OCI-LY7 (cell line): ENCODE measurements at regions of chr2 and their contacts with region 1.

Region 1: DNA sequence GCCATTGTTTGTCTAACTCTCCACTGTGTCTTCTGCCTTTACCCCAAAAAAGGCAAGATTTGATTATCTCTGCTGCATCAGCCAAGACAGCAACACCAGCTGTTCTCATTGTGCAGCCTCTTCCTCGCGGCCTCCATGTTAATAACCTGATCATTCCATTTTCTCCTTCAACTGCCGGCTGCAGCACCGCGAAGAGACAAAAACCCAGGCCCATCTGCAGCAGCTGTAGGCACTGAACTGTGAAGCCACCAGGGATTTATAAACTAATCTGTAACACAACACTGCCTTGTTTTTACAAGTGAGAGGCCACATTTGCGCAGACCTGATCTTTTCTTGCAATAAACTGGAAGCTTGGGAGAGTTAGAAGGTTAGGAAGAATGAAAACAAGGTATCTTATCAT is 147.8 kb downstream of the SATB2 start:
- DNase-seq: peak; percentile 96
- H3K4me3 ChIP-seq: peak overlapping the region; percentile 54
- H3K27ac ChIP-seq: peak overlapping the region; percentile 99
- H3K4me1 ChIP-seq: peaks cover 84% of the 10 kb centered on the region
- CTCF ChIP-seq: no peak

Region 2: DNA sequence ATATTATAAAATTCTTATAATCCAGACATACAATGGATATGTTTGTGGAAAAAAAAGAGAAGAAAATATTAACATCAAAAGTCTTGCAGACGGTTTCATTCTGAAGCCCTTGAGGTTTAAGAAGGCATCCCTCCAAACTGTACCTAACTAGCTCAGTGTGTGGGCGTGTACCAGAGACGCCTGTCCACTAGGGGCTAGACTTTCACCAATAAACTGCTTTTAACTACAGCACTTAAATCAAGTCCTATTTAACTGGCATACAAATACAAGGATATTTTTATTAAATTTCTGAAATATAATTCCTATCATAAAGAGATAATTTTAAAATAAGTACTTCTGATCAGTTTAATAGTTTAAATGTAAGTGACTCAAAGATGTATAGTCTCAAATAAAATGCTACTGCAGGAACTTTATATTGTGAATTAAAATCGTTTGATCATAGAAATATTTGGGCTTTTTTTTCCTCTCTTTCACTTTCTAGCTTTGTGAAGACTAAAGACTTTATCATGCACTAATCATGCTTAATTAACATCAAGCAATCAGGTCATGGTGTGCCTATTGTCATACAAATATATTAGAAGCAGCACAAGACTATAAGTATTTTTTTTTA is 290.0 kb before region 1 on chr2:
- CTCF ChIA-PET with region 1: no interaction called
- POLR2A ChIA-PET with region 1: no interaction called
- intact Hi-C with region 1: loop called (anchors 5 kb)
- DNase-seq: peak; percentile 85
- H3K4me3 ChIP-seq: no peak overlapping the region
- H3K27ac ChIP-seq: no peak overlapping the region
- H3K4me1 ChIP-seq: peaks cover 29% of the 10 kb centered on the region
- CTCF ChIP-seq: peak; percentile 91

Region 3: DNA sequence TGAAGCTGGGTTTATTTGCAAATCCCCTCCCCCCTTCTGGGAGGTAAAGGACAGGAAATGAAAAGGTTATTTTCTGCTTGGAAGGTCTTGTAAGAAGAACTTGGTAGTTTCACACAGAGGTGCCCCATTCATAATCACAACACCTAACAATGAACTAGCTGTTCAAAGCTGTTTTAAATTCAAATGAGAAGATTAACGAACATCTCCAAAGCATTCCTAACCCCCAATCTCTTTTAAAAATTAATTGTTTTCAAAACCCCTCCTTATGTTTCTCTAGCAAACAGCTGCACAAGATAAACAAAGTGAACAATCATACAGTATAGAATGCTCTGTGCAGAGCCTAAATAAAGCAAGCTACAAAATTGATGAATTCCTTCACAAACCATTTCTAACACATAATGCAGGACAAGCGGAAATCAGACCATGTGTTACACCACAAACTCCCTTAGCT is 123.6 kb before region 1 on chr2:
- CTCF ChIA-PET with region 1: no interaction called
- POLR2A ChIA-PET with region 1: interaction called, 3 read pairs
- intact Hi-C with region 1: loop called (anchors 5 kb)
- DNase-seq: peak; percentile 90
- H3K4me3 ChIP-seq: peak overlapping the region; percentile 56
- H3K27ac ChIP-seq: peak overlapping the region; percentile 82
- H3K4me1 ChIP-seq: peaks cover 52% of the 10 kb centered on the region
- CTCF ChIP-seq: no peak

Region 4: DNA sequence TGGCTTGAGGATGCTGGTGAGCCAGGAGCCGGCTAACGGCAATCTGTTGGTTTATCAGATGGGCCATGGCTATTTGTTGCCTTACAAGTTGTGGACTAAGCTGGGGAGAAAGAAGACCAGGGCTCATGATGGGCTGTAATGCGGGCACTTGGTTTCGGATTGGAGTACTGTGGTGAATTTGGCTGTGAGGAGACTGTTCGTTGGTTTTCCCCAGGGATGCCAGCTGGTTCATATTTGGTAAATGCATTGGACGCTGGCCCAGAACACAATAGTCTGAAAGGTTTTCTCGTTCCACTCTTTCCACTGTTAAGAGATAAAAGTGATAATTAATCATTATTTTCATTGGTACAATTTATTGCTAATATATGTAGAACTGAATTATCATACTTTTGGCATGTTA is 38.9 kb after region 1 on chr2:
- CTCF ChIA-PET with region 1: no interaction called
- POLR2A ChIA-PET with region 1: no interaction called
- intact Hi-C with region 1: no loop called
- DNase-seq: no peak
- H3K4me3 ChIP-seq: no peak overlapping the region
- H3K27ac ChIP-seq: no peak overlapping the region
- H3K4me1 ChIP-seq: no peaks in the 10 kb centered on the region
- CTCF ChIP-seq: no peak

Region 5: DNA sequence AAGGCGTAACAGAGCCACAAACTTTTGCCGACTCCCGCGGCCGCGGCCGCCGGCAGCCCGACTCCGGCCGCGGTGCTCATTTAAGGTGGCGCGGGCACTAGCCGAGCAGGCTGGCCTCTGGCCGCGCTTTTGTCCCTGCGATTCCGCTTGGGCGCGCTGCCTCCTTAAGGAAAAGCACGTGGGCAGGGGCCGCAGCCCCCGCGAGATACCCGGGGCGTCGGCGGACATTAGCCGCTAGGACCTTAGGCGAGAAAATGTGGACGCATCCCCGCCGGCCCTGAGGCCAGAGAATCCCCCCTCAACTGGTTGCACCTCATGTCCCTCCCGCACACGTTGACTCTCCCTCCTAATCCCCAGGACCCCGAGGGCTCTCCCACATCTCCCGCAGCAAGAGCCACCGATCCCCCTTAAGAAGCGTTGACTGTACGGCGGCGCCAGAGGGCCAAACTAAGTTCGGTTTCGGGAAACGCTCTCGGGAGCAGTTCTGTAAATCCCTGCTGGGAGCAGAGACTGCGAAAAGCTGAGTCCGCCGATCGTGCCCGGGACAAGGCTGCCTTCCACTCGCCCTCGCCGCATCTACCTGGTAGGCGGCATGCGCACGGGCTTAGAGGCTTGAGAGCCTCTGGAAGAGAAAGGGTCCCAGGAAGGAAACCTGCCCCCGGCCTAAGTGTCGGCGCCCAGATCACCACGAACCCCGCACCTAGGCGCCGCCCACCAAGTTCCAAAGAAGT is 149.5 kb after region 1 on chr2:
- CTCF ChIA-PET with region 1: no interaction called
- POLR2A ChIA-PET with region 1: interaction called, 3 read pairs
- intact Hi-C with region 1: loop called (anchors 1 kb)
- DNase-seq: peak; percentile 81
- H3K4me3 ChIP-seq: peak overlapping the region; percentile 86
- H3K27ac ChIP-seq: peak overlapping the region; percentile 79
- H3K4me1 ChIP-seq: peaks cover 34% of the 10 kb centered on the region
- CTCF ChIP-seq: peak; percentile 42; the same call in 1 of the 2 replicates

Region 6: GRCh38 chr2:199810422-199811171 is 500.6 kb after region 1 on chr2:
- CTCF ChIA-PET with region 1: no interaction called
- POLR2A ChIA-PET with region 1: no interaction called
- intact Hi-C with region 1: no loop called
- DNase-seq: no peak
- H3K4me3 ChIP-seq: no peak overlapping the region
- H3K27ac ChIP-seq: no peak overlapping the region
- H3K4me1 ChIP-seq: no peaks in the 10 kb centered on the region
- CTCF ChIP-seq: no peak

Region 7: DNA sequence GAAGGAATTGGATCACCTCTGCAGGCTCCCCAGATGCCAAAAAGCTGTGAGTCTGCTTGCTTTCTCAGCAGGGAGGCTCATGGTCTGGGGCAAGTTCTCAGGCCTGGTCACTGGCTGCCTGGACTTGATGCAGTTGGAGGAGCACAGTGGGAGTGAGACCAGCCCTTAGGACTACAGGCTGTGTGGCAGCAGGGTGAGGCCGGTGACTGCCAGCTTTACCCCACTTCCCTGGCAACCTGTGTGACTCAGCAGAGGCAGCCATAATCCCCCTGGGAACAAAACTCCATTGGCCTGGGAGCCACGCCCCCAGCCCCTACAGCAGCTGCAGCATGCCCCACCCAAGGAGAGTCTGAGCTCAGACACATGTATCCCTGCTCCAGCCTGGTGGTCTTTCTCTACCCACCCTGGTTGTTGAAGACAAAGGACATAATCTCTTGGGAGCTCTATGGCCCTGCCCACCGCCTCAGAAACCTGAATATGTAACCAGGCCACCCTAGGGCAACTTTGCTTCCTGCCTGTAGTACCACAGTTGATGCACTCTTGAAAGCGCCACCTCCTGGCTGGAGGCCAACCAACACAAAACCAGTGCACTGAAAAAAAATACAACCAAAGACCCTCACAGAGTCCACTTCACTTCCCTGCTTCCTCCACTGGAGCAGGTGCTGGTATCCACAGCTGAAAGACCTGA is 889.7 kb after region 1 on chr2:
- CTCF ChIA-PET with region 1: no interaction called
- POLR2A ChIA-PET with region 1: no interaction called
- intact Hi-C with region 1: no loop called
- DNase-seq: peak; percentile 2
- H3K4me3 ChIP-seq: no peak overlapping the region
- H3K27ac ChIP-seq: no peak overlapping the region
- H3K4me1 ChIP-seq: no peaks in the 10 kb centered on the region
- CTCF ChIP-seq: peak; percentile 60